ENCODE measurements at regions of chr4 and their contacts with region 1.

Region 1: DNA sequence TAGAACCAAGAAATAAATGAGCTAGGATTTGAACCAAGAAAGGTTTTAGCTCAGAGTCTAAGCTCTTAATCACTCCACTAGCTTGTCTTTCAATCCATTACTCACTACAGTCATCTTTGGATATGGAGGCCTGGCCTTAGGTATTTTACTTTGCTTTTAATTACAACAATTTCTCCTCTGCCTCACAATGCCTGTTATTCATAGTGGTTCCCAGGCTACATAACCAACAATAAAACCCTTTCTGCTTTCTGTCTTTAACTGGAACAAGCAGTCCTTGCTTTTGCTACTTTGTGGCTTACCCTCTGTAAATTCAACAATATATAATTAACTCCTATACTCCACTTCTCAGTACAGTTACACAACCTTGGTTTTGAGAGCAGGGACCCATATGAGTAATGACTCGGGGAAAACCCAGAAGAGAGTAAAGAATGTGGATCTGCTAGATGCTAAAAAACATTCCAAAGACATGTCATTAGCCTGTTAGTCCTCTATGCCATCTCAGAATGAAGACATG is 94.7 kb upstream of the NAP1L5 start:
- DNase-seq: peak; percentile 16
- ATAC-seq: peak; percentile 93
- H3K4me3 ChIP-seq: no peak overlapping the region
- H3K27ac ChIP-seq: no peak overlapping the region
- H3K4me1 ChIP-seq: peaks cover 9% of the 10 kb centered on the region
- H3K27me3 ChIP-seq: no peaks in the 10 kb centered on the region
- CTCF ChIP-seq: no peak
- EP300 ChIP-seq: peak; percentile 36 to 65; a peak in 2 of 4 replicates
- POLR2A ChIP-seq: no peak
- RAD21 ChIP-seq: no peak

Region 2: GRCh38 chr4:88533937-88534750 is 258.2 kb before region 1 on chr4:
- CTCF ChIA-PET with region 1: interaction called, 76 read pairs
- POLR2A ChIA-PET with region 1: no interaction called
- RAD21 ChIA-PET with region 1: interaction called, 11 read pairs
- SMC1A ChIA-PET with region 1: interaction called, 9 read pairs
- in situ Hi-C with region 1: no loop called
- intact Hi-C with region 1: loop called (anchors 1 kb)
- DNase-seq: no peak
- ATAC-seq: no peak
- H3K4me3 ChIP-seq: no peak overlapping the region
- H3K27ac ChIP-seq: no peak overlapping the region
- H3K4me1 ChIP-seq: no peaks in the 10 kb centered on the region
- H3K27me3 ChIP-seq: no peaks in the 10 kb centered on the region
- CTCF ChIP-seq: no peak
- EP300 ChIP-seq: no peak
- POLR2A ChIP-seq: no peak
- RAD21 ChIP-seq: no peak

Region 3: GRCh38 chr4:88672987-88673386 is 119.3 kb before region 1 on chr4:
- CTCF ChIA-PET with region 1: interaction called, 8 read pairs
- POLR2A ChIA-PET with region 1: no interaction called
- RAD21 ChIA-PET with region 1: interaction called, 3 read pairs
- SMC1A ChIA-PET with region 1: interaction called, 3 read pairs
- in situ Hi-C with region 1: no loop called
- intact Hi-C with region 1: loop called (anchors 5 kb)
- DNase-seq: no peak
- ATAC-seq: peak; percentile 91
- H3K4me3 ChIP-seq: no peak overlapping the region
- H3K27ac ChIP-seq: no peak overlapping the region
- H3K4me1 ChIP-seq: no peaks in the 10 kb centered on the region
- H3K27me3 ChIP-seq: no peaks in the 10 kb centered on the region
- CTCF ChIP-seq: peak; percentile 50 to 67 (median 64)
- EP300 ChIP-seq: no peak
- POLR2A ChIP-seq: no peak
- RAD21 ChIP-seq: peak; percentile 51

Region 4: DNA sequence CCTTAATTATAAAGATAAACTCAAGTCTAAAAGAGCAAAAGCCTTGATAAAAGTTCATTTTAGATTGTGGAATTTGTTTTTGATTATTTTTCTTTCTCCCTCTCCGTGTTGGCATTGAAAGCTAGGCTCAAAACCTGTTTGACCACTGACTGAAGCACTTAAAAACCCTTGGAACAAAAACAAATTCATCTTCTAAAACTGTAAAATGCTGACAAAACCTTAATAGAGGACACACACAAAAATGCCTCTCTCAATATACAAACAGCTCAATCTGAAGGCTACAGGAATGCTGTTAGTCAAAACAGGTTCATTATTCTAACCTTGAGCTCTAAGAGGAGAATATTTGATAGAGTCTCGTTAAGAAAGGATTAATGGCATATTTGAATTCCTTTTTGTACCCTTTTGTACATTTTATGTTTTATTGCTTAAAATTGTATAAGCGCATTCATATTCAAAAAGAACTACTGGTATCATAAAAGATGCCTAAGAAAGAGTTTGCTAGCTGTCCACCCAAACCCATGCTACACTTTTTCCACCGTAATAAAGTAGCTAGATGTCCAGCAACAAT is 20.4 kb before region 1 on chr4:
- CTCF ChIA-PET with region 1: interaction called, 11 read pairs
- POLR2A ChIA-PET with region 1: no interaction called
- RAD21 ChIA-PET with region 1: no interaction called
- SMC1A ChIA-PET with region 1: interaction called, 3 read pairs
- in situ Hi-C with region 1: no loop called
- intact Hi-C with region 1: no loop called
- DNase-seq: no peak
- ATAC-seq: no peak
- H3K4me3 ChIP-seq: no peak overlapping the region
- H3K27ac ChIP-seq: no peak overlapping the region
- H3K4me1 ChIP-seq: no peaks in the 10 kb centered on the region
- H3K27me3 ChIP-seq: peaks cover 0 to 3% of the 10 kb centered on the region in 2 experiments; a peak in 1 of 4 replicates
- CTCF ChIP-seq: no peak
- EP300 ChIP-seq: no peak
- POLR2A ChIP-seq: no peak
- RAD21 ChIP-seq: no peak

Region 5: GRCh38 chr4:88779431-88779830 is 12.9 kb before region 1 on chr4:
- CTCF ChIA-PET with region 1: interaction called, 10 read pairs
- POLR2A ChIA-PET with region 1: no interaction called
- RAD21 ChIA-PET with region 1: interaction called, 3 read pairs
- SMC1A ChIA-PET with region 1: interaction called, 6 read pairs
- in situ Hi-C with region 1: no loop called
- intact Hi-C with region 1: no loop called
- DNase-seq: no peak
- ATAC-seq: no peak
- H3K4me3 ChIP-seq: no peak overlapping the region
- H3K27ac ChIP-seq: no peak overlapping the region
- H3K4me1 ChIP-seq: no peaks in the 10 kb centered on the region
- H3K27me3 ChIP-seq: peaks cover 0 to 2% of the 10 kb centered on the region in 2 experiments; a peak in 1 of 4 replicates
- CTCF ChIP-seq: no peak
- EP300 ChIP-seq: no peak
- POLR2A ChIP-seq: no peak
- RAD21 ChIP-seq: no peak